Panc1 (cell line): ENCODE measurements at regions of chr2 and their contacts with region 1.

Region 1: GRCh38 chr2:231425291-231425810 is 29.8 kb downstream of the B3GNT7 start:
- DNase-seq: no peak
- ATAC-seq: peak; percentile 55
- H3K4me3 ChIP-seq: no peak overlapping the region
- H3K27ac ChIP-seq: peak overlapping the region; percentile 27; the same call in 1 of the 2 replicates
- H3K4me1 ChIP-seq: peaks cover 10% of the 10 kb centered on the region
- H3K27me3 ChIP-seq: no peaks in the 10 kb centered on the region
- CTCF ChIP-seq: no peak

Region 2: DNA sequence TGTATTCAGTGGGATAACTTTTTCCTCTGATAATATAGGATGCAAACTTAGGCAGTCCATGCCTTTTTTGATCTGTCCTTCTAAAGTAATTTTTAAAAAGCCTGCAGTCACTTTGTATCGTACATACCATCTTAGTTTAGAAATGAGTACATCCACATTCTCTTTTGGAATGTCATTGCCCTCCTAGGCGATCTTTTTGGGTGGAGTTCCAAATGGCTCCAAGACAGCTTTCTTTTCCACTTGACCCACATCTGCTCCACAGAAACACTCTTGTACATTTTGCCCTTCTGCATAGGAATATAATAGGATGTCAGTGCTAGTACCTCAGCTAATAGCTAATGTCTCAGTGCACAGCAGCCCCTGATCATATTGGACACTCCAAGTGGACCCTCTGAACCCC is 278.7 kb before region 1 on chr2:
- CTCF ChIA-PET with region 1: no interaction called
- POLR2A ChIA-PET with region 1: no interaction called
- in situ Hi-C with region 1: no loop called
- intact Hi-C with region 1: no loop called
- DNase-seq: no peak
- ATAC-seq: no peak
- H3K4me3 ChIP-seq: no peak overlapping the region
- H3K27ac ChIP-seq: no peak overlapping the region
- H3K4me1 ChIP-seq: no peaks in the 10 kb centered on the region
- H3K27me3 ChIP-seq: no peaks in the 10 kb centered on the region
- CTCF ChIP-seq: no peak

Region 3: DNA sequence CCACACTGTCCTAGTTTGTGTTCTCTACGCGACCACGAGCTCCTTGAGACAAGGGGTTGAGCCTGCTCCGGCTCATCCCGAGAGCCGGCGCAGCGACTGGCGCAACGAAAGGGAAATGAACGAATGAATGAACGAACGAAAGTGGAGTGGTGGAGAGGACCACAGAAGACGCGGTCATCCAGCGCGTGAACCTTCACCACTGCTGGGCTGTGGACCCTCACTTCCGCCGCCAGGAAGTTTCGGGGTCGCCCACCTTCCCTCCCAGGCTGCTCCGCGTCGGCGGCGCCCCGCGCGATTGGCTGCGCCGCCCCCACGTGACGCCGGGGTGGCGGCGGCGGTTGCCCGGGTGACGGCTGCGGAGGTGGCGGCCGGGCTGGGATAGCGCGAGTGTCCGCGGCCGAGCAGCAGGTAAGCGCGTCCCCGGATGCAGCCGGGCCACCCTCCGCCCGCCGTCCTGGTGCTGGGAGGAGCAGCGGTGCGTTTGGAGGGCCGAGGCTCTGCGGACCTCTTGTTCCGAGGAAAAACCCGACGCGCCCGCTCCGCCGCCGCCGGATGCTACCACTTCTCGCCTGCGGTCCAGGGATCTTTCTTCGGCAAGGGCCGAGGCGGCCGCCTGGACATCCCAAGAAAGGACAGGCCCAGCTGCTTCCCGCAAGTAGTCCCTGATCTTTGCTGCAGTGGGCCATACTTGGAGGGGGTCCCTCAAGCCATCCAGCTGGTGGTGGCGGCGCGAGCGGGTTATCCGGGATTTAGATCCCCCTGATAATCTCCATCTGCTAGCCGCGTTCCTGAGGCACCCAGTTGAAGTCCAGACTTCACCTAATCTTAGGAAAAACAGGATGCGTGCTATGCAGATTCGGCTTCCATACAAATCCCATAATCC is 226.8 kb before region 1 on chr2 and contains the start of gene ARMC9:
- CTCF ChIA-PET with region 1: no interaction called
- POLR2A ChIA-PET with region 1: interaction called, 12 read pairs
- in situ Hi-C with region 1: no loop called
- intact Hi-C with region 1: no loop called
- DNase-seq: peak; percentile 35
- ATAC-seq: peak; percentile 97
- H3K4me3 ChIP-seq: peak within 1 kb of the TSS; percentile 83 to 94
- H3K27ac ChIP-seq: peak within 1 kb of the TSS; percentile 93
- H3K4me1 ChIP-seq: 0 out of 2 replicates have a peak, but pooled peaks cover 8% of the 10 kb centered on the region
- H3K27me3 ChIP-seq: no peaks in the 10 kb centered on the region
- CTCF ChIP-seq: no peak
- total RNA-seq, gene ARMC9: 42.7 TPM

Region 4: DNA sequence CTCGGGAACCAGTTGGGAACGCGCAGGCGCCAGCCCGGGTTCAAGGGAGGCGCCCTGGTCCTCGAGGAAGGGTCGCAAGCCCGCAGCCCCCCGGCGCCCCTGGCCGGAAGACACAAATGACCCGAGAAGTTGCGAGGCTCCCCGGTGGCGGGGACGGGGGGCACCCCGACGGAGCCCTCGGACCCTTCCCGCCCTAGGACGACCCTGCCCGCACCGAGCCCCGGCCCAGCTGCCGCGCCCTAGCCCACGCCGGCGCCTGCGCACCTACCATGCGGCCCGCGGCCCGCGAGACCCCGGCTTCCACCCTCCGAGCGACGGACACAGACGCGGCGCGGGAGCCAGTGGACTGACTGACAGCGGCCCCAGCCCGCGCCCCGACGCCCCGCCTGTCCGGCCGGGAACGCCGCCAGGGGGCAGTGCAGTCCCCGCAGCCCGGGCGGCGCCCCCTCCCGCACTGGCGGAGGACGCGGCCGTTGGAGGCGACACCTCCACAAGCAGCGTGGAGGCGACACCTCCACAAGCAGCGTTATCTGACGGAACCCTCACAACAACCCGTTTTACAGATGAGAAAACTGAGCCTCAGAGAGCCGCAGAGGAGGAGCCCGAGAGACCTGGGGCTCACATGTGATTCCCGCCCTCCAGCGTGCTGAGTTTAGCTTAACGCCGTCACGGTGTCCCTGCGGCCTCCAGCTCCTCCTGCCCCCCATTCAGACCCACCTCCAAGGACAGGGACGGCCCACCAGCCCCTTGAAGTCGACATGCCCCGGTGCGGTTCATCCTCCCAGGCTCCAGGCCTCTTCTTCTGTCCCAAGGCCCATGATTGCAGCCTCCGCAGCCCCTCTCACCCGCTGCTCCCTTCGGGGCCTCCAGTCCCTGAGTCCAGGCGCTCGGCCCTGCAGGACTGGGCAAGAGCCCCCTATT is 105.0 kb after region 1 on chr2 and contains the start of gene NMUR1:
- CTCF ChIA-PET with region 1: no interaction called
- POLR2A ChIA-PET with region 1: no interaction called
- in situ Hi-C with region 1: no loop called
- intact Hi-C with region 1: no loop called
- DNase-seq: no peak
- ATAC-seq: peak; percentile 86
- H3K4me3 ChIP-seq: peak within 1 kb of the TSS; percentile 33 to 39
- H3K27ac ChIP-seq: no peak within 1 kb of the TSS
- H3K4me1 ChIP-seq: peaks cover 2% of the 10 kb centered on the region; the same call in 1 of the 2 replicates
- H3K27me3 ChIP-seq: no peaks in the 10 kb centered on the region
- CTCF ChIP-seq: peak; percentile 95
- total RNA-seq, gene NMUR1: 0.28 TPM